Vagina (tissue), 2 donors: ENCODE measurements at regions of chr12 and their contacts with region 1.

Region 1: GRCh38 chr12:47837190-47838171 is 17.8 kb upstream of the HDAC7 start:
- DNase-seq: no peak
- H3K4me3 ChIP-seq: no peak overlapping the region
- H3K27ac ChIP-seq: no peak overlapping the region
- H3K4me1 ChIP-seq: peaks cover 8% of the 10 kb centered on the region
- H3K27me3 ChIP-seq: no peaks in the 10 kb centered on the region
- CTCF ChIP-seq: peak; percentile 85 to 97 (median 95)
- POLR2A ChIP-seq: no peak

Region 2: DNA sequence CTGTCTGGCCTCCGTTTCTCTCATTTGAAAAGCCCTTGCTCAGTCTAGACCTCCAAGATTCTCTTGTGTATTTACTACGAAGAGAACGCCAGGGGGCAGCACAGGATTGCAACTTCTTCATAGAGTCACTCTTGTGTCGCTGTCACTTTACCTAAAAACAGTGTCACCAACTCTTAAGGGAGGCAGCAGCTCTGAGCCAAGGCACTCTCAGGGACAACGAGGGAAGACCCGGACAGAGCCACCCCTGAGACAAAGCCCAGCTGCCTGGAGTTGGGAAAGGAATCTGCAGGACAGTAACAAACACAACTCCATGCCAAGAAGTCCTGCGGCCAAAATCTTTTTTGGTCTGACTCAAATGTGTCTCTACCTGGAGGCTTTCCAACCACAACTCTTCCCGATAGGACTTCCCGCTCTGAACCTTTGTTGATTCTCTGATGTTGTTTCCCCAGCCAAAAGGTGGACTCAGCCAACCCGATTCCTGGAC is 122.0 kb before region 1 on chr12:
- intact Hi-C with region 1: loop called (anchors 10 kb)
- DNase-seq: peak in 1 of 2 donors; percentile 77
- H3K4me3 ChIP-seq: peak overlapping the region in 1 of 2 donors; percentile 17
- H3K27ac ChIP-seq: peak overlapping the region; percentile 86
- H3K4me1 ChIP-seq: peaks cover 44% of the 10 kb centered on the region
- H3K27me3 ChIP-seq: no peaks in the 10 kb centered on the region
- CTCF ChIP-seq: peak; percentile 75 to 89 (median 76)
- POLR2A ChIP-seq: no peak

Region 3: DNA sequence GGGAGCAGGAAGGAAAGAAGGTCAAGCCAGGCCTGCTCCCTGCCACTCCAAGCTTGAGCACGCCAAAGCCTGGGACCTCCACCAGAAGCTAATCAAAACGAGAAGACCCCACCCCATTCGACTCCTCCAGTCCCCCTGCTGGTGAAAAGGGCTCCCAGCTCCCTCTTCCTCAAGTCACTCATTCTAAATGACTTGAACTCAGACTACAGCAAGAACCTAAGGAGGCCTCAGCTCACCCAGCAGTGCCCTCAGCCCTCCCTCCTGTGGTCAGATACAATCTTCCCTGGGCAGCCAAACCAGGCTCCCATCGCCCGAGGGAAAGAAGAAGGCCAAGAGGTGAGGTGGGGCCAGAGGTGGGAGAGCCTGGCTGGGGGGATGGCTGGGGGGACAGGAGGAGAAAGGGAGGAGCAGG is 35.2 kb before region 1 on chr12:
- intact Hi-C with region 1: loop called (anchors 5 kb)
- DNase-seq: no peak
- H3K4me3 ChIP-seq: no peak overlapping the region
- H3K27ac ChIP-seq: peak overlapping the region; percentile 74
- H3K4me1 ChIP-seq: peaks cover 85% of the 10 kb centered on the region
- H3K27me3 ChIP-seq: no peaks in the 10 kb centered on the region
- CTCF ChIP-seq: no peak
- POLR2A ChIP-seq: no peak